ENCODE measurements at regions of chr16 and their contacts with region 1.

Region 1: GRCh38 chr16:15427648-15428239 is 6.6 kb upstream of the BMERB1 start:
- DNase-seq: peak; percentile 78
- ATAC-seq: peak; percentile 93

Region 2: DNA sequence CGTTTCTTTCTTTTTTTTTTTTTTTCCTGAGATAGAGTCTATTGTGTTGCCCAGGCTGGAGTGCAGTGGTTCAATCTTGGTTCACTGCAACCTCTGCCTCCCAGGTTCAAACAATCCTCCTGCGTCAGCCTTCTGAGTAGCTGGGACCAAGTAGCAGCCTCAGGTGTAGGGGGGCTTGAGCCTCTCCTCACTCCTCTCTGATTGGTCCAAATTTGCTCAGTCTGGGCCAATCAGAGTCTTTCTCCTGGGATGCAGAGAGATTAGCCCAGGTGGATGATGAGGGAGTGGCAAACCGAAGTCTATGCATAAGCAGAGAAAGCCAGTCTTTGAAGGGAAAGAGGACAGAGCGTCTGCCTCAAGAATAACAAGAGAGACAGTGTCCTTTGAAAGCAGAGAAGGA is 105.6 kb after region 1 on chr16:
- intact Hi-C with region 1: no loop called
- DNase-seq: no peak
- ATAC-seq: no peak

Region 3: DNA sequence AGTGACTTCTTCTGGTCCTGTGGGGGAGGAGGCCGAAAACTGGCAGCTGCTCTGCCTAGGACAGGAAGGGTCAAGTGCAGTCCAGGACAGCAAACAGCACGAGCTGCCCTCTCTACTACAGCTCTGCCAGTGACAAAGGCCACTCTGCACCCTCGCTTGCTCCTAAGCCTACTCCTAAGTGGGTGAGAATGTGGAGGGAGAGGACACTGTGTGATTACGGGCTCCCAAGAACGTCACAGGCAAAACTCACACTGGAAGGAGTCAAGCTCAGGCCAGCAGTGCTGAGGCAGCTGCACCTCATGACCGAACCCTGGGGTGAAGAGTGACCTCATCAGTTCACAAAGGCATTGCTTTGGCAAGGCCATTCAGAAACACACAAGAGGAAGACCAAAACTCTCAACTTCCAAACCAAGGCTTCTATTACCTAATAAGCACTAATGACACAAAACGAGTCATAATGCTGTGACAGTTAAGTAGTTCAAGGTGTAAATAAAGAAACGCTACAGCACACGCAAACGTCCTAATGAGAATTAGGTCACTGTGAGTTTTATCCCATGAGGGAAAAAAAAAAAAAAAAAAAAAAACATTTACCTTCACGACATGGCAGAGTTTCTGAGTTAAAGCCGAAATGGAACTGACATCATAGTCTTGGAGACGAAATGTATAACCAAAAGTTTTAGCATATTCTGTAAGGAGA is 180.1 kb after region 1 on chr16:
- intact Hi-C with region 1: loop called (anchors 10 kb)
- DNase-seq: peak; percentile 78
- ATAC-seq: peak; percentile 93

Region 4: GRCh38 chr16:15704545-15704987 is 276.8 kb after region 1 on chr16:
- intact Hi-C with region 1: loop called (anchors 10 kb)
- DNase-seq: peak; percentile 81
- ATAC-seq: peak; percentile 90